ENCODE measurements at regions of chr13 and their contacts with region 1.

Region 1: DNA sequence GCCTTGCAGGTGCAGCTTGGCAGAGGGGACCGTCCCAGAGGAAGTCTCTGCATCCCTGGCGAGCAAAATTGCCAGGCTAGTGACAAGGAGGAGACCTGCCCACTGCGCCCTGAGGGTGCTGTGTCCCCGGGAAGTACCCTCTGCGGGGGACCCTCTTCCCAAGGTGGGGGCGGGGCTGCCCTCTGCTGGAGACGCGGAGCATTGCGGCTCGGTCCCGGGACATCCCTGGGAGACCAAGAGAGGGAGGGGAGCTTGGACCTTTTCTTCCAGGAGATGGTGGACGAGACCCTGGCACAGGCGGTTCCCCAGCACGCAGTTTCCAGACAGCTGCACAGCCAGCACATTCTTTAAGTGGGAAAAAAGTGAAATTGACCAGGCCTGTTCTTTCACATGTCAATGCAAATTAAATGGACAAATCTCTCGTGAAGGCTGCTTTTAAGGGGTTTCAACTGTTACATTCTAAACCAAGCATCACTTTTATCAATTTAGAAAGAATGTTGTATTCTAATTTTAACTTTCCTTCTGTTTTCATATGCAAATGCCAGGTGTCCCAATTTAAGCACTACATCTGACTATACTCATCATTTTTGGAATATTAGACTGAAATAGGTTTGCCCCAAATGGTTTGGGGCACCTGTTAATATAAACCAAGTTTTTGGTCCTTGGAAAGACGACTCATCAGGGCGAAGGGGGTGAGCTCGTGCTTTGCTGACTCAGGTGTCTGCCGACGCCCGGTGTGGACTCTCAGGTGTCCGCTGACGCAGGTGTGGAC is 60.7 kb downstream of the MCF2L start:
- DNase-seq: no peak
- ATAC-seq: no peak
- H3K4me3 ChIP-seq: no peak overlapping the region
- H3K27ac ChIP-seq: no peak overlapping the region
- H3K4me1 ChIP-seq: no peaks in the 10 kb centered on the region
- H3K27me3 ChIP-seq: no peaks in the 10 kb centered on the region
- CTCF ChIP-seq: peak; percentile 55

Region 2: GRCh38 chr13:112942689-112943308 is 86.9 kb before region 1 on chr13:
- intact Hi-C with region 1: loop called (anchors 5 kb)
- DNase-seq: peak; percentile 95 to 97
- ATAC-seq: peak; percentile 94 to 99 (median 96)
- H3K4me3 ChIP-seq: peak overlapping the region; percentile 69
- H3K27ac ChIP-seq: peak overlapping the region; percentile 10
- H3K4me1 ChIP-seq: peaks cover 3% of the 10 kb centered on the region
- H3K27me3 ChIP-seq: peaks cover 0 to 27% (median 2%) of the 10 kb centered on the region in 3 donors
- CTCF ChIP-seq: peak; percentile 94

Region 3: GRCh38 chr13:113083402-113084061 is 53.9 kb after region 1 on chr13:
- intact Hi-C with region 1: loop called in 1 of 2 experiments (anchors 5 kb)
- DNase-seq: peak; percentile 65 to 82
- ATAC-seq: peak; percentile 78 to 94 (median 90)
- H3K4me3 ChIP-seq: no peak overlapping the region
- H3K27ac ChIP-seq: no peak overlapping the region
- H3K4me1 ChIP-seq: no peaks in the 10 kb centered on the region
- H3K27me3 ChIP-seq: peaks cover 0 to 18% (median 4%) of the 10 kb centered on the region in 3 donors
- CTCF ChIP-seq: no peak

Region 4: DNA sequence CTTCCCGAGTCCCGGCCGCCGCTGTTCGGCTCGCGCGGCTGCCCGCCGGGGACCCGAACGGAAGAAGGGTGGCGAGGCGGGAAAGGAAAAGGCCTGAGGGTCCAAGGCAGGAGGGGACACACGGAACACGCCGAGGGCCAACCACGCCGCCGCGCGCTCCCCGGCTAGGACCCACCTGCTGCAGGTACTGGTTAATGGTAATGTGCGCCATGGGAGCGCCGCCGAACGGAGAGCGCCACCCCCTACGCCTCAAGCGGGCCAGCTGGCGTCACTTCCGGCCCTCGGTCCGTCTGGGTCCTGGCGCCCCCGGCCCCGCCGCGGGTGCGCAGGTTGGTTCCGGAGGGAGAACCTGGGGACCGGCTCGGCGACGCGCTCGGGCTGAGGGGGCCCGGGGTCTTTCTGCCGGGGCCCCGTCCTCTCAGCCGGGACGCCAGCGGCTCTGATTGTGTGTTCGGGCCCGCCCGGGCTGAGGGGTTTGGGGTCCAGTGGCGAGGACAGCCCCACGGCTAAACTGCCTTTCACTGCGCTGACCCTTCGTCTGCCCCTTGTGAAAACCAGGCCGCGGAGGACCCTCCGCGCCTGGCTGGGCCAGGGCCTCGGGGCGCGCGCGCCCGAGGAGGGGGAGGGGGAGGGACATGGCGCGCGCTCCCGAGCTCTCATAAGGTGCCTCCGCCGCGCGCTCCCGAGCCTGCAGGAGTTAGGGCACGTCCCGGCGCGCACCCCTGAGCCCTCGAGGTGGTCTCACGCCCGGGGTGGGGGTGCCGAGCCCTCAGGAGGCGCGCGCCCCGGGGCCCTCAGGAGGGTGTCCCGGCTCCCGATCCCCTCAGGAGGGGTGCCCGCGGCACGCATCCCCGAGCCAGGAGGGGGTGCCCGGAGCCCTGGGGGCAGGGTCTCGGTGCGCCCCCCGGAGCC is 179.0 kb after region 1 on chr13 and contains the start of gene PCID2:
- intact Hi-C with region 1: loop called in 1 of 2 experiments (anchors 10 kb)
- DNase-seq: peak; percentile 89 to 94
- ATAC-seq: peak; percentile 91 to 93 (median 92)
- H3K4me3 ChIP-seq: peak within 1 kb of the TSS; percentile 88
- H3K27ac ChIP-seq: peak within 1 kb of the TSS; percentile 98
- H3K4me1 ChIP-seq: peaks cover 62% of the 10 kb centered on the region
- H3K27me3 ChIP-seq: no peaks in the 10 kb centered on the region
- CTCF ChIP-seq: peak; percentile 4
- total RNA-seq, gene PCID2: 22.5 to 37.1 (median 26.4) TPM

Region 5: GRCh38 chr13:113393563-113394338 is 364.1 kb after region 1 on chr13:
- intact Hi-C with region 1: loop called in 1 of 2 experiments (anchors 10 kb)
- DNase-seq: peak; percentile 88 to 91
- ATAC-seq: peak; percentile 71 to 88 (median 75)
- H3K4me3 ChIP-seq: peak overlapping the region; percentile 84
- H3K27ac ChIP-seq: peak overlapping the region; percentile 73
- H3K4me1 ChIP-seq: peaks cover 9% of the 10 kb centered on the region
- H3K27me3 ChIP-seq: no peaks in the 10 kb centered on the region
- CTCF ChIP-seq: peak; percentile 92

Measured in psoas muscle (tissue), 8 donors.